PC-9 (cell line): ENCODE measurements at regions of chr11 and their contacts with region 1.

Region 1: DNA sequence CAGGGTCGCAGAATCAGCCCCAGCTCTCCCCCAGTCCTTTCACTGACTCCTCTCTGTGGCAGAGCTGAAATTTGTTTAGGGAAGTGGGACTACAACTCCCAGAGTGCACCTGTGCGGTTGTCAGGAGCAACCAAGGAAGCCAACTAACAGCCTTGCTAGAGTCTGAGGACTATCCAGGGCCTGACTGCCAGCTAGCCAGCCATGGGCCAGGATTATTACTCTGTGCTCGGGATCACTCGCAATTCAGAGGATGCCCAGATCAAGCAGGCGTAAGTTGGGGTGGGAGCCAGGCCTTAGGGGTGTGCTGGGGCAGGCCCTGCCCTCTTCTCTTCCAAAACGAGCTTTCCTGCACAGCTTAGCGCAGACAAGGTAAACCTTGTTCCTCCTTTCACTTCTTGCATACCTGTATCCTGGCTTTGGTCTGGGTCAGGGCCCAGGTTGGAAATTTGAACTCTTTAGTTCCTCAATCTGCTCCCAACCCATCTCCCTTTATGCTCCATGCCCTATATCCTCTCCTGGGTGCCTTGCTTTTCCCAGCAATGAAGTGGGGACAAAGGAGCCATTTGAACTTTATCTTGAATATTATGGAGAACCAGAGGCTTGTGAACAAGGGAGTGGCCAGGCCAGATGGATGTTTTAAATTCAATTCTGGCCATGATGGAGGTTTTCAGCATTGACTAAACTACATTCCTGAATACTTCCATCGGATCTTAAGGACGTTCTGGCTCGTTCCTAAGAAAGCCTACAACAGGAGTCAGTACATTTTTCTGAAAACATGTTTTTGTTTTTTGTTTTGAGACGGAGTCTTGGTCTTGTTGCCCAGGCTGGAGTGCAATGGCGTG is at the start of gene DNAJB13:
- DNase-seq: peak; percentile 45 to 47
- H3K4me3 ChIP-seq: no peak within 1 kb of the TSS
- H3K27ac ChIP-seq: no peak within 1 kb of the TSS
- H3K4me1 ChIP-seq: peaks cover 7% of the 10 kb centered on the region
- H3K27me3 ChIP-seq: no peaks in the 10 kb centered on the region
- CTCF ChIP-seq: no peak
- total RNA-seq, gene DNAJB13: 0.79 and 0.90 TPM in 2 replicates

Region 2: DNA sequence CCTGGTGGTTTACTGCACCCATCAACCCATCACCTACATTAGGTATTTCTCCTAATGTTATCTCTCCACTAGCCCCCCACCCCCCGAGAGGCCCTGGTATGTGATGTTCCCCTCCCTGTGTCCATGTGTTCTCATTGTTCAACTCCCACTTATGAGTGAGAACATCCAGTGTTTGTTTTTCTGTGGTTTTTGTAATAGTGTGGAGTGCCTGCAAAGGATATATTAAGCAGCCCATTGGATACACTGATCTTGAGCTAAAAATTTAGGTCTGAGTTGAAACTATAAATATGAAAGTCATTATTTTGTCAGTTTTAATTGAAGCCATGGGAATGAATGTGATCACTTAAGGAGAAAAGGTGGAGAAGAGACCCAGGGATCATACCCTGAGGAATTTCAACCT is 140.5 kb before region 1 on chr11:
- CTCF ChIA-PET with region 1: no interaction called
- POLR2A ChIA-PET with region 1: no interaction called
- intact Hi-C with region 1: no loop called
- DNase-seq: no peak
- H3K4me3 ChIP-seq: no peak overlapping the region
- H3K27ac ChIP-seq: no peak overlapping the region
- H3K4me1 ChIP-seq: no peaks in the 10 kb centered on the region
- H3K27me3 ChIP-seq: no peaks in the 10 kb centered on the region
- CTCF ChIP-seq: no peak

Region 3: DNA sequence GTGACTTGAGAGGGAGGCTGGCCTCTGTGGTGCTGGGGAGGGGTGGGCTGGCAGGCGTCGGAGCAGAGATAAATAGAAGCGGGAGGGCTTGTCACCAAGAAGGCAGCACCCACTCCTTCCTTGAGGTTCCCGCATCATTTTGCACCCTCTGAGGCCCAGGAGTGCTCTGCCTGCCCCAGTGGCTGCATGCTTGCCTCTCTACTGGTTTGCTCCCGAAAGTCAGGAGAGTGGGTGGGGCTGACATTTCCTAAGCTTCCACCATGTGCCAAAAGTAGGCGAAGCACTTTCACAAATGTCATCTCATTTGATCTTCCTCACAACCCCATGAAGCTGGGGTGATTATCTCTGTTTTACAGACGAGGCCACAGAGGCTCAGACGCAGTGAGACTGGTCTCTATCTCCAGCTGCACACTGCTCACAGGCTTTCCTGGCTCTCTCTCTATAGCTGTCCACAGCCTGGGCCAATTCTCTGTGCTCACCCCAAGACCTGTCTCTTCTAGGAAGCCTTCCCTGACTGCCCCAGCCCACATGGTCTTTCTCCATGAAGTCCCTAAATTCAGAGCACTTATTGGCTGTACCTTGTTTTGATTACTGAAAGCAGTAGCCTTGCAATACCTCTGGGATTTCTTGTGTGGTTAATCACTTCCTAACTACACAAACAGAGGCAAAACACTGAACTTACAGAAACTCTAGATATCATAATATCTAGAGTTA is 60.4 kb after region 1 on chr11:
- CTCF ChIA-PET with region 1: no interaction called
- POLR2A ChIA-PET with region 1: no interaction called
- intact Hi-C with region 1: no loop called
- DNase-seq: no peak
- H3K4me3 ChIP-seq: no peak overlapping the region
- H3K27ac ChIP-seq: no peak overlapping the region
- H3K4me1 ChIP-seq: no peaks in the 10 kb centered on the region
- H3K27me3 ChIP-seq: no peaks in the 10 kb centered on the region
- CTCF ChIP-seq: no peak

Region 4: GRCh38 chr11:74279256-74279655 is 328.2 kb after region 1 on chr11:
- CTCF ChIA-PET with region 1: no interaction called
- POLR2A ChIA-PET with region 1: interaction called, 14 read pairs
- intact Hi-C with region 1: no loop called
- DNase-seq: no peak
- H3K4me3 ChIP-seq: no peak overlapping the region
- H3K27ac ChIP-seq: peak overlapping the region; percentile 27
- H3K4me1 ChIP-seq: peaks cover 25% of the 10 kb centered on the region
- H3K27me3 ChIP-seq: no peaks in the 10 kb centered on the region
- CTCF ChIP-seq: no peak